ENCODE measurements at regions of chr15 and their contacts with region 1.

Region 1: DNA sequence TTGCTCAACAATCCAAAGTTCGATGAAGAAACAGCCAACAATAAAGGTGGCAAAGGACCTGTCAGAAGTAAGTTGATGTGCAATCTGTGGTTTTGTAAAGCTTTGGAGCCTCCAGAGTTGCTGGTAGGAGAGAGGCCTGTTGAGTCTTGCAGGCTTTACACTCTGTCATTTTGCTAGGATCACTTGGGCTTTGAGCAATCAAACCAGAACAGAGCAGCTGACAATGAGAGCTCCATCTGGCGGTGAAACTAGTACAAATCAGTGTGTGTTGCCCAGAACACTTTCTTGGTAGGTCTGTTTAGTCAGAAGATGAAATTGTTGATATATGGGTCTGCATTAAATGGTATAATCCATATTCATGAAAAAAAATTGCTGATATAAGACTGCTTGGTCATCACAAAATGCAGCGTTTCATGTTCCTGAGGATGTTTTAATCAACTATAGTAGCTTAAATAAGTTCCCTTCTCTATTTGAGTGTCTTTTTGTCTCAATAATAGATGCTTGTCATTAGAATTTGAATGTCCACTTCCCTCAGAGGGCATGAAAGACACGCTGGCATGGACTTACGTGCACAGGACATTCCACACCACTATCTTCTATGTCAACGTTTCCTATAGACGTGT is 25.7 kb downstream of the TMOD2 start:
- DNase-seq: peak in 1 of 2 donors; percentile 50
- H3K4me3 ChIP-seq: no peak overlapping the region
- H3K27ac ChIP-seq: no peak overlapping the region
- H3K4me1 ChIP-seq: peaks cover 0 to 6% (median 0%) of the 10 kb centered on the region in 4 donors
- H3K27me3 ChIP-seq: no peaks in the 10 kb centered on the region
- CTCF ChIP-seq: peak; percentile 63 to 72

Region 2: GRCh38 chr15:51649659-51650521 is 127.2 kb before region 1 on chr15:
- intact Hi-C with region 1: loop called (anchors 2 kb)
- DNase-seq: peak in 1 of 2 donors; percentile 22
- H3K4me3 ChIP-seq: no peak overlapping the region
- H3K27ac ChIP-seq: no peak overlapping the region
- H3K4me1 ChIP-seq: no peaks in the 10 kb centered on the region
- H3K27me3 ChIP-seq: no peaks in the 10 kb centered on the region
- CTCF ChIP-seq: peak; percentile 68 to 76

Region 3: GRCh38 chr15:51737280-51738017 is 39.6 kb before region 1 on chr15 and contains the start of gene LYSMD2:
- intact Hi-C with region 1: no loop called
- DNase-seq: peak; percentile 79 to 88
- H3K4me3 ChIP-seq: peak within 1 kb of the TSS; percentile 74 to 81
- H3K27ac ChIP-seq: peak within 1 kb of the TSS; percentile 75 to 83
- H3K4me1 ChIP-seq: peaks cover 0 to 26% (median 19%) of the 10 kb centered on the region in 4 donors
- H3K27me3 ChIP-seq: no peaks in the 10 kb centered on the region
- CTCF ChIP-seq: peak in 1 of 2 experiments; percentile 6

Region 4: DNA sequence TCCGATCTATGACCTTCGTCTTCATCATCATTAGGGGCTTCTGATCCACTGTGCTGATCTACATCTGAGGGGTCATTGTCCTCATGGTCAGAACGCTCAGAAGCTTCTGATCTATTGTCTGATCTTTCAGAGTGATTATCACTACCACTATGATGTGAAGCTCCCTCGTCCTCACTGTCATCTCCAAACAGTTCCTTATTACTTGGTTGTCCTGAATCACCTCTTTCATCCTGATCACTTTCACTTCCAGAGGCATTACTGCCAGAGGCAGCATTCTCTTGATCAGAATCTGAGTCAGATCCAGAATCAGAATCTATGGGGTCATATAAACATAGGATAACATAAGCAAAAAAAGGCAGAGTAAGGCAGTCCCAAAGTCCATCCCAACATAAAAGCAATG is 189.1 kb after region 1 on chr15:
- intact Hi-C with region 1: no loop called
- DNase-seq: no peak
- H3K4me3 ChIP-seq: no peak overlapping the region
- H3K27ac ChIP-seq: no peak overlapping the region
- H3K4me1 ChIP-seq: peaks cover 0 to 11% (median 8%) of the 10 kb centered on the region in 4 donors
- H3K27me3 ChIP-seq: no peaks in the 10 kb centered on the region
- CTCF ChIP-seq: no peak

Measured in tibial artery (tissue), 4 donors.